ENCODE measurements at regions of chr12 and their contacts with region 1.

Region 1: GRCh38 chr12:106317406-106318082 is 15.0 kb downstream of the TCP11L2 start:
- DNase-seq: no peak
- H3K4me3 ChIP-seq: no peak overlapping the region
- H3K27ac ChIP-seq: no peak overlapping the region
- H3K4me1 ChIP-seq: no peaks in the 10 kb centered on the region
- H3K27me3 ChIP-seq: no peaks in the 10 kb centered on the region
- CTCF ChIP-seq: no peak
- POLR2A ChIP-seq: no peak

Region 2: DNA sequence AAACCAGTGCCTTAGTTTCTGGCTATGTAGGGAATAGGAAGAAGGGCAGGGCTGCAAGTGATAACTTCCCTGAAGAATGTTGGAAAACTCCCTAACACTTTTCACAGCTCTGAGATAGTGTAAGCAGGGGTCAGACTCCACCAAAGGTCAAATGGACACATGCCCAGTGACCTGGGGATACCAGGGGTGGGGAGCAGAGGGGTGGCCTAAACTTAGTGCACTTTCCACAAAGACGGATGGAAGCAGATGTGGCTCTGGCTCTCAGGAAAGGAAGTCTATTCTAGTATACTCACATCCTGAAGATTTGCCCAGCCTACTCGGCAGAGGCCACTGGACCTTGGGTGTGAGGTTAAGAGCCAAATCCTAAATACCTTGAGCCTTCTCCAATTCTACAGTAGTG is 464.6 kb before region 1 on chr12:
- CTCF ChIA-PET with region 1: no interaction called
- POLR2A ChIA-PET with region 1: no interaction called
- dilution Hi-C with region 1: no loop called
- intact Hi-C with region 1: no loop called
- DNase-seq: no peak
- H3K4me3 ChIP-seq: no peak overlapping the region
- H3K27ac ChIP-seq: no peak overlapping the region
- H3K4me1 ChIP-seq: peaks cover 23% of the 10 kb centered on the region
- H3K27me3 ChIP-seq: no peaks in the 10 kb centered on the region
- CTCF ChIP-seq: no peak
- POLR2A ChIP-seq: no peak

Region 3: GRCh38 chr12:106189341-106189740 is 128.2 kb before region 1 on chr12:
- CTCF ChIA-PET with region 1: no interaction called
- POLR2A ChIA-PET with region 1: interaction called, 13 read pairs
- dilution Hi-C with region 1: no loop called
- intact Hi-C with region 1: no loop called
- DNase-seq: no peak
- H3K4me3 ChIP-seq: no peak overlapping the region
- H3K27ac ChIP-seq: no peak overlapping the region
- H3K4me1 ChIP-seq: no peaks in the 10 kb centered on the region
- H3K27me3 ChIP-seq: peaks cover 15 to 29% of the 10 kb centered on the region in 2 experiments
- CTCF ChIP-seq: no peak
- POLR2A ChIP-seq: no peak